ENCODE measurements at regions of chr12 and their contacts with region 1.

Region 1: DNA sequence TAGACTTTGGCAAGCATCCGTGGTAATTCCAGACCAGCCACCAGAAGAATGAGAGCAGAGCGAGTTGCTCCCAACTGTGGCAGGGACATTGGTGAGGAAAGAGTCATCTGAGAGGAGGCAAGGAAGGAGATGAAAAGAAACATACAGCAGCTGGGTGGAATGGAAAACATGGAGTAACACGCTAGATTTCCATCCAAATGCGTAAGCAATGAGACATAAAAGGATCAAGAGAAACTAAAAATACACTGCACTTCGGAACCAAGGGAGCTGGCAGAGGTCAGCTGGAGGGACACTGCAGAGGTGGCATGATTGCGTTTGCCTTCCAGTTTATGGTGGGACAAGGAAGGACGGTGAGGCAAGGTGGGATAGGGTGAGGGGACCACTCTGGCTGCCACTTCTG is 82.9 kb downstream of the DDX51 start:
- DNase-seq: no peak
- ATAC-seq: no peak
- H3K4me3 ChIP-seq: no peak overlapping the region
- H3K27ac ChIP-seq: no peak overlapping the region
- H3K4me1 ChIP-seq: no peaks in the 10 kb centered on the region
- H3K27me3 ChIP-seq: no peaks in the 10 kb centered on the region
- CTCF ChIP-seq: no peak

Region 2: DNA sequence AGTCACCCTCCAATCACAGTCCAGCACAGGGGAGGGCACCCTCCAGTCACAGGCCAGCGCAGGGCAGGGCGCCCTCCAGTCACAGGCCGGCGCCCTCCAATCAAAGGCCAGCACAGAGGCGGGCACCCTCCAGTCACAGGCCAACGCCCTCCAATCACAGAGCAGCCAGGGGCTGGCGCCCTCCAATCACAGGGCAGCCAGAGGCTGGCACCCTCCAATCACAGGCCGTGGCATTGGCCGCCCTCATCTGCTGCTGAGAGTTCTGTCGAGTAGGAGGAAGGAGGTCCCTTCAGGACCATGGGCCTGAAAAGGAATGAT is 56.3 kb after region 1 on chr12:
- CTCF ChIA-PET with region 1: interaction called, 13 read pairs
- POLR2A ChIA-PET with region 1: no interaction called
- in situ Hi-C with region 1: no loop called
- intact Hi-C with region 1: no loop called
- DNase-seq: no peak
- ATAC-seq: peak; percentile 80
- H3K4me3 ChIP-seq: no peak overlapping the region
- H3K27ac ChIP-seq: no peak overlapping the region
- H3K4me1 ChIP-seq: no peaks in the 10 kb centered on the region
- H3K27me3 ChIP-seq: no peaks in the 10 kb centered on the region
- CTCF ChIP-seq: no peak

Measured in Panc1 (cell line).